ENCODE measurements at regions of chr5 and their contacts with region 1.

Region 1: DNA sequence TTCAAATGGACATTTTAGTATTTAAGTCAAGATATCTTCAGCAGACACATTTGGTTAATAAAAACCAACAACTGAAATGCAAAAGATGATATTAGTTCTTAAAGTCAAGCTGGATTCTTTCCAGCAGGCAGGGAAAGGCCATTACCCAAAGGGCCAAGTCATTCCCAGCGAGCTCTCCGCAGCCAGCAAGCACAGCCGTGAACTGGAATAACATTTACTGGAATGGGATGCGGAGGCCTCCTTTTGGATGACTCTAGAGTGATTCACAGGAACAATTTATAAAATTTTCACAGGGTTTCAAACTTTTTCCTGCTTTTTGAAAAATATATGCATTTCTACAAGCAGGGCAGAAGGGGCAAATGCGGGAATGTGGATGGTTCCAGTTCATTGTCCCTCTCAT is 76.6 kb upstream of the DAB2 start:
- DNase-seq: peak; percentile 83
- H3K4me3 ChIP-seq: no peak overlapping the region
- H3K27ac ChIP-seq: peak overlapping the region; percentile 64
- H3K4me1 ChIP-seq: peaks cover 26% of the 10 kb centered on the region
- H3K27me3 ChIP-seq: no peaks in the 10 kb centered on the region
- CTCF ChIP-seq: no peak
- POLR2A ChIP-seq: no peak

Region 2: DNA sequence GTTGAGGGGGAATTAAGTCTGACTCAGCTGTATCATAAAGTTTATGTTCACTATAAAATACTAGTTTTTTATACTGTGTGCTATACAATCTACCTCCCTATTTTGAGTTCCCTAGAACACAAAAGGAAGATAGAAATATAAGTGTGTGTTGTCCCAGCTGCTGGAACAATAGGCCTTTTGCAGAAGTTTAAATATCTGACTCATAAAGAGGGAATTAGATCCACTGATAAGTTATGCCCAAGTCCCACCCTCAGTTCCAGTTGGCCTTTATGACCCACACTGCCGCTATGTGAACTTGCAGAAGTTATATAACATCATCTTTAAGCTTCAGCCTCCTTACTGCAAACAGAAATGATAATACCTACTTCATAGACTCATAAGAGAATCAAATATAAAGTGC is 11.8 kb after region 1 on chr5:
- CTCF ChIA-PET with region 1: interaction called, 23 read pairs
- POLR2A ChIA-PET with region 1: interaction called, 4 read pairs
- dilution Hi-C with region 1: no loop called
- intact Hi-C with region 1: no loop called
- DNase-seq: peak; percentile 88
- H3K4me3 ChIP-seq: no peak overlapping the region
- H3K27ac ChIP-seq: peak overlapping the region; percentile 66
- H3K4me1 ChIP-seq: peaks cover 36% of the 10 kb centered on the region
- H3K27me3 ChIP-seq: no peaks in the 10 kb centered on the region
- CTCF ChIP-seq: no peak
- POLR2A ChIP-seq: no peak

Region 3: GRCh38 chr5:39520232-39520572 is 18.8 kb after region 1 on chr5:
- CTCF ChIA-PET with region 1: interaction called, 23 read pairs
- POLR2A ChIA-PET with region 1: interaction called, 4 read pairs
- dilution Hi-C with region 1: no loop called
- intact Hi-C with region 1: no loop called
- DNase-seq: peak; percentile 95
- H3K4me3 ChIP-seq: peak overlapping the region in 1 of 3 experiments; percentile 46
- H3K27ac ChIP-seq: peak overlapping the region; percentile 95
- H3K4me1 ChIP-seq: peaks cover 55% of the 10 kb centered on the region
- H3K27me3 ChIP-seq: no peaks in the 10 kb centered on the region
- CTCF ChIP-seq: no peak
- POLR2A ChIP-seq: peak; percentile 53

Region 4: DNA sequence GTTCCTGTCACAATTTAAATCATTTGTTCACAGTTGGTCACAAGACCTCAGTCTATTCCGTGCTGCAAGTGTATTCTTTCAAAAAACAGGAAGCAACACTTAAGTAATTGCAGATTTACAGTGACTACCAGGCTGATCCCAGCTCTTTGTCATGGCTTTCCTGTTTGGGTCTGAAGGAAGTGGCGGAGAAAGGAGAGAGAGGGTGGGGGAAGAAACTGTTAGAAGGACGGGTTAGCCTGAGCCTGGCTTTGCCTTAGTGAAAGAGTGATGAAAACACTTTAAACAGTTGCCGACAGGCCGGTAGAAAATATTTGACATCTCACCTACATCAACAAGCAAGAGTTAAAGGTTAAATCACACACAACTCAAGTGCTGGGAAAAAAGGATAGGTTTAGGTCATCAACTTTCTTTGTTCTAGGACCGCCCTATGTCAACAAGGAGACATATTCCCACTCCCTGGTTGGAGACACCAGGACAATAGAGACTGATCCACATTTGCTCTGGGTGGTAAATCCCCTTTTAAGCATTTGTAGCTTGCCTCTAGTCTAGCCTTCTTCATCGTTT is 25.6 kb after region 1 on chr5:
- CTCF ChIA-PET with region 1: interaction called, 8 read pairs
- POLR2A ChIA-PET with region 1: interaction called, 5 read pairs
- dilution Hi-C with region 1: no loop called
- intact Hi-C with region 1: loop called (anchors 2 kb)
- DNase-seq: peak; percentile 98
- H3K4me3 ChIP-seq: no peak overlapping the region
- H3K27ac ChIP-seq: peak overlapping the region; percentile 99
- H3K4me1 ChIP-seq: peaks cover 37% of the 10 kb centered on the region
- H3K27me3 ChIP-seq: no peaks in the 10 kb centered on the region
- CTCF ChIP-seq: no peak
- POLR2A ChIP-seq: peak; percentile 15

Measured in endothelial cell of umbilical vein (primary cell).